Mucosa of descending colon (tissue), 3 donors: ENCODE measurements at regions of chr7 and their contacts with region 1.

Region 1: DNA sequence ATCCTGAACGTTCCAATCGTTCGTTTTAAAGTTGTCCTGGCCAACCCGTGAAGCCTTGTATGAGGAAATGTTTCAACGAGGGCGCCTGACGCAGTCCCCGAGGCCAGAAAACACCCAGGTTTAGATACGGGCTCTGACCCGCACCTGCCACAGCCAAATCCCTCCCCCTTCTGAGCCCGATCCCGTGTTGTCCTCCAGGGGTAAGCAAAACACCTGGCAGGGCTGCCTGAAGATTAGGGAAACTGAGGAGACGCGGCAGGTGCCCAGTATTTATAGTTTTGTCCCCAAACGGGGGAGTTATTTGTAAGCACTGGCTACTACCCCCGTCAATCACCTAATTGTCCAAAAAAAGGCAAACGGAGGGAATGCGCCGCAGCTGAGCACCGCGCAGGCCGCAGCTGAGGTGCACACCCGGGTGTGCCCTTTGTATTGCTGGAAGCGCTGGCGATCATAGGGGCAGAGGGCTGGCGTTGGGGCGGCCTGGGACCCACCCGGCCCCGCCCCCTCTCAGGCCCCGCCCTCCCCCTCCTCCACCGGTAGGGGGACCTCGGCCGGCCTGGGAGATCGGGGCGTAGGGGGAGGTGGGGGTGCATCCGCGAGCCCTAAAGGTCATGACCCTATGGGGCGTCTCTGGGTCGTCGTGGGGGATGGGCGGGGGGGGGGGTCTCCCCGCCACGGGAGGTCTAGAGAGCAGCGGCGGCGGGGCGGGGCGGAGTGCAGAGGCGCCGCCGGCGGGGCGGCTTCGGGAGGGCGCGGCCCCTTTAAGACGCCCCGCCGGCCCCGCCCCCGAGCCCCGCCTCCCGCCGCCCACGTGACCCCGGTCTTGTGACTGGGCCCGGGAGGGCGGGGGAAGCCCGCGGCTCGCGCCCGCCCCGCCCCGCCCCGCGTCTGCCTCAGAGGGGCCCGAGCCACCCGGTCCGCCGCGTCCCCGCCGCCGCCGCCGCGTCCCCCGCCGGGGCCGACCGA is at the start of gene BRI3:
- DNase-seq: peak; percentile 94 to 98 (median 96)
- ATAC-seq: peak; percentile 73
- H3K4me3 ChIP-seq: peak within 1 kb of the TSS; percentile 72
- H3K4me1 ChIP-seq: peaks cover 54% of the 10 kb centered on the region
- CTCF ChIP-seq: peak; percentile 26
- total RNA-seq, gene BRI3: 186 to 205 (median 202) TPM

Region 2: GRCh38 chr7:98211221-98211675 is 69.8 kb before region 1 on chr7 and contains the start of gene BHLHA15:
- intact Hi-C with region 1: no loop called
- DNase-seq: peak; percentile 74 to 82 (median 80)
- ATAC-seq: peak; percentile 76
- H3K4me3 ChIP-seq: no peak within 1 kb of the TSS
- H3K4me1 ChIP-seq: peaks cover 3% of the 10 kb centered on the region
- CTCF ChIP-seq: no peak
- total RNA-seq, gene BHLHA15: 1.3 to 2.8 TPM in 2 of 3 donors, not detected in the other

Region 3: GRCh38 chr7:98400542-98401340 is 119.7 kb after region 1 on chr7 and contains the start of gene BAIAP2L1:
- intact Hi-C with region 1: loop called in 1 of 2 experiments (anchors 10 kb)
- DNase-seq: peak; percentile 93 to 99 (median 98)
- ATAC-seq: peak; percentile 91
- H3K4me3 ChIP-seq: peak within 1 kb of the TSS; percentile 56
- H3K4me1 ChIP-seq: peaks cover 5% of the 10 kb centered on the region
- CTCF ChIP-seq: peak; percentile 77
- total RNA-seq, gene BAIAP2L1: 39.9 to 78.0 (median 65.4) TPM